Stomach (tissue), 19 donors: ENCODE measurements at regions of chr9 and their contacts with region 1.

Region 1: DNA sequence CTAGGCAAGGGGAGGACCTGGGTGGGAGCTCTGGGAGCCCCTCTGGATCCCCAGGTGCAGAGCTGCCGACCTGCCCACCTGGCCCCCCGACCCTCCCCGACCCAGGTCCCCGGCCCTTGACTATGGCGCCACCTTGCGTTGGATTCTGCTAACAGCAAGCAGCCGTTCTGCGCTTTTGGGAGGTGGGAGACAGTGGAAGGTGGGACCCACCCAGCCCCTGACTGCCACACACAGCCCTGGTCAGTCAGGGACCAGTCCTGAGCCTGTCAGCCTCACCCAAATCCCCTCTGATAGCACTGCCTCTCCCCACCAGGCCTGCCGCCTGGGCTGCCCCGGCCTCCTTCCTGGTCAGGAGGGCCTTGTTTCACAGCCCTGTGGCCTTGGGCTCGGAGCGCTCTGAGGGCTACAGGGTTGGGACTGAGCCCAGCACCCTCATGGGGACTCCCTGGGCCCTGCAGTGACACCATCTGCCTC is 77.9 kb downstream of the HMCN2 start:
- DNase-seq: peak in 1 of 2 donors; percentile 51
- H3K4me3 ChIP-seq: no peak overlapping the region
- H3K27ac ChIP-seq: no peak overlapping the region
- H3K4me1 ChIP-seq: peaks cover 0 to 5% (median 2%) of the 10 kb centered on the region in 4 donors
- H3K27me3 ChIP-seq: peaks cover 0 to 20% (median 0%) of the 10 kb centered on the region in 3 donors
- CTCF ChIP-seq: peak in 5 of 7 experiments; percentile 26 to 61 (median 53)
- EP300 ChIP-seq: no peak
- POLR2A ChIP-seq: no peak

Region 2: GRCh38 chr9:130234340-130235242 is 108.9 kb before region 1 on chr9:
- intact Hi-C with region 1: loop called (anchors 5 kb)
- DNase-seq: no peak
- H3K4me3 ChIP-seq: no peak overlapping the region
- H3K27ac ChIP-seq: peak overlapping the region in 3 of 5 donors; percentile 26 to 74 (median 47)
- H3K4me1 ChIP-seq: peaks cover 7 to 19% (median 13%) of the 10 kb centered on the region in 4 donors
- H3K27me3 ChIP-seq: no peaks in the 10 kb centered on the region
- CTCF ChIP-seq: no peak
- EP300 ChIP-seq: no peak
- POLR2A ChIP-seq: no peak